ENCODE measurements at regions of chr19 and their contacts with region 1.

Region 1: DNA sequence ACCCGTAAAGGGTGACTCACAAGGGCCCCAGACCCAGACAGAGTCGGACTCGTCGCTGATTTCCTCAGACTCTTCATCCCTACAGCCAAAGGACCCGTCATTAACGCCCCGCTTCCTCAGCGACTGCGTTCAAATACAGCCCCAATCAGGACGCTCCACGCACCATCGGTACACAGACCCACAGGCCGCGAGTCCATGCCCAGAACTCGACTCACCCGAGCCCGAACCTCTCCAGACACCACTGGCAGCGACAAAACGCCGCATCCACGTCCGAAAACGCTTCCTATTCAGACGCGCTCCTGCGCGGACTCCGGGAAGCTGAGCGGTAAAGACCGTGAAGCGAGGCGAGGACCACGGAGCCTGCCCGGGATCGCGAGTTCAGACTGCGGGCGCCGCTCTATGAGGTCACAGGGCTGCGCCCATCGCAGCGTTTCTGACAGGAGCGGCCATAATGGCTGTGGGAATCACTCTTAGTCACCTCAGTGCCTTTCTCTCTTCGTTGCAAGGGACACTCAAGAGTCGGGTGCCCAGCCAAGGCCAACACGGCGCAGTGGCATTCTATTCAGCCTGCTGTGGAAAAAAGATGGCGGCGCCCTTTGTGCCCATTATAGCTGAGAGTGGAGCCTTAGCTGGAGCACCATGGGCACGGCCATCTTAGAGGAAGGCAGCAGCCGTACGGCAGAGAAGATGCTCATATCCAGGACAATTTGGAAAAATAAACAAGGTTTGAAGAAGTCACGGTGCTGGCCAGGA is at the start of gene ZNF614:
- DNase-seq: peak; percentile 83
- H3K4me3 Mint-ChIP-seq: peak within 1 kb of the TSS; percentile 92
- H3K27ac Mint-ChIP-seq: peak within 1 kb of the TSS; percentile 97
- H3K4me1 Mint-ChIP-seq: peaks cover 36% of the 10 kb centered on the region
- H3K27me3 Mint-ChIP-seq: no peaks in the 10 kb centered on the region
- total RNA-seq, gene ZNF614: 11.2 and 11.3 TPM in 2 replicates

Region 2: GRCh38 chr19:51926784-51927742 is 101.1 kb before region 1 on chr19 and contains the start of gene ZNF613:
- intact Hi-C with region 1: loop called (anchors 1 kb)
- DNase-seq: peak; percentile 73
- H3K4me3 Mint-ChIP-seq: peak within 1 kb of the TSS; percentile 99
- H3K27ac Mint-ChIP-seq: peak within 1 kb of the TSS; percentile 94
- H3K4me1 Mint-ChIP-seq: peaks cover 23% of the 10 kb centered on the region
- H3K27me3 Mint-ChIP-seq: no peaks in the 10 kb centered on the region
- total RNA-seq, gene ZNF613: 3.1 and 3.8 TPM in 2 replicates

Region 3: GRCh38 chr19:52007806-52008557 is 20.2 kb before region 1 on chr19 and contains the start of gene ZNF615:
- intact Hi-C with region 1: loop called (anchors 1 kb)
- DNase-seq: peak; percentile 80
- H3K4me3 Mint-ChIP-seq: peak within 1 kb of the TSS; percentile 94
- H3K27ac Mint-ChIP-seq: peak within 1 kb of the TSS; percentile 94
- H3K4me1 Mint-ChIP-seq: peaks cover 20% of the 10 kb centered on the region
- H3K27me3 Mint-ChIP-seq: no peaks in the 10 kb centered on the region
- total RNA-seq, gene ZNF615: 6.4 and 6.9 TPM in 2 replicates

Region 4: GRCh38 chr19:52095172-52096014 is 67.2 kb after region 1 on chr19 and contains the start of gene ZNF841:
- intact Hi-C with region 1: loop called (anchors 1 kb)
- DNase-seq: peak; percentile 81
- H3K4me3 Mint-ChIP-seq: peak within 1 kb of the TSS; percentile 92
- H3K27ac Mint-ChIP-seq: peak within 1 kb of the TSS; percentile 90
- H3K4me1 Mint-ChIP-seq: peaks cover 22% of the 10 kb centered on the region
- H3K27me3 Mint-ChIP-seq: no peaks in the 10 kb centered on the region
- total RNA-seq, gene ZNF841: 13.7 and 16.1 TPM in 2 replicates

Region 5: DNA sequence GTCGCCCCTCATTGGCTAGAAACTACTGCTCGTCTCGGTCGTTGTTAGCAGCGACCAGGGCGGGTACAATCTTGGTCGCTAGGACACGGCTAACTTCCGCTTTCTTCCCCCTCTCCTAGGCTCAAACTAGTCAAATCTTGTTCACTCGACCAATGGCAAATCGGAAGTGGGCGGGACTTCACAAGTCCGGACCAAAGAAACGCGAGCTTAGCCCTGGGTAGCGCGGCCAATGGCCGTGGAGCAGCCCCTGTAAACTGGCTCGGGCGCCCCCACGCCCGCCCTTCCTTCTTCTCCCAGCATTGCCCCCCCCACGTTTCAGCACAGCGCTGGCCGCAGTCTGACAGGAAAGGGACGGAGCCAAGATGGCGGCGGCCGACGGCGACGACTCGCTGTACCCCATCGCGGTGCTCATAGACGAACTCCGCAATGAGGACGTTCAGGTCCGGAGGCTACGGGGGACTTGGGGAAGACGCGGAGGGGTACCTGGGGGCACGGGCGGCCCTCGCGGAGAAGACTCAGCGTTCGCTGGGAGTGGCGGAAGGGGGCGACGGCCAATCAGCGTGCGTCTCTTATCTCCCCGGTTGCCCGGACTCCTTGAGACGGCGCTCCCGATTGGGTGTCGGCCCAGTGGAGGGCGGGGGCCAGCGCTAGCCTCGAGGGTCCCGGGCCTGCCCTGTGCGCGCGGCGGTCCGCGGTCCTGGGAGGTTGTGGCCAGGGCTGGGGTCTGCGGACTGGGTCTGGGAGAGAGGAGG is 161.7 kb after region 1 on chr19 and contains the start of gene PPP2R1A:
- intact Hi-C with region 1: loop called (anchors 5 kb)
- DNase-seq: peak; percentile 97
- H3K4me3 Mint-ChIP-seq: peak within 1 kb of the TSS; percentile 98
- H3K27ac Mint-ChIP-seq: peak within 1 kb of the TSS; percentile 99
- H3K4me1 Mint-ChIP-seq: peaks cover 45% of the 10 kb centered on the region
- H3K27me3 Mint-ChIP-seq: no peaks in the 10 kb centered on the region
- total RNA-seq, gene PPP2R1A: 214 and 215 TPM in 2 replicates

Region 6: DNA sequence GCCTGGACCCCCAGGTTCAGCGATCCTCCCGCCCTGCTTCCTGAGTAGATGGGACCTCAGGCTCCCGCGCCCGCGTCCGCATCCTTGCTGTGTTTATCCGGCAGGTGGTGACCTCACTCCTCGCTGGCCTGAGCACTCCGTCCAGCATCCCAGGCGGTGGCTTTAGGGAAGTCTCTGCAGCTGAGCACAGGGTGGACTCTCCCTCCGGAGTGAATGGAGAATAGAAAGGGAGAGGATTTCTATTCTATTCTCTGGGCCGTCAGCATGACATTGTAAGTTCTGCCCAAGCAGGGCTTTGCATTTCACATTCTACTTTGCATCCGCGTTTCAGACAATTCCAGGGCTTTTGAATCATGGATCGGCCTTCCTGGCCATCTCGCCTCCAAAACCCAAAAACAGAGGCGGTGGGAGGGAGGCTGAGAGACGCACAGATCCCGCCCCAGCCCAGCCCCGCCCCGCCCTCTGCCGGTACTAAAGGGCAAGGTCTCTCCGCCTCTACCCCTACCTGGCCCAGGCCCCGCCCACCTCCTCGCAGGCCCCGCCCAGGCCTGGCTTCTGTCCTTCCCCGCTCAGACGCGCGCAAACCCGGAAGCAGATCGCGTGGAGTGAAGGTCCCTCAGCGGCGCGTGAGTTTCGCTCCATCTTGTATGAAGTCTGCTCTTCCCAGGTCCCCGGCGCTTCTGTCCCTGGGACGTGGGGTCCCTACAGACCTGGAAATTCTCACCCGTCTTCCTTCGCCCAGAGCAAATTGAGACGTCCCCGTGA is 1337.1 kb after region 1 on chr19 and contains the start of gene ZNF525:
- intact Hi-C with region 1: loop called (anchors 1 kb)
- DNase-seq: peak; percentile 93
- H3K4me3 Mint-ChIP-seq: peak within 1 kb of the TSS; percentile 93
- H3K27ac Mint-ChIP-seq: peak within 1 kb of the TSS; percentile 91
- H3K4me1 Mint-ChIP-seq: peaks cover 17% of the 10 kb centered on the region
- H3K27me3 Mint-ChIP-seq: no peaks in the 10 kb centered on the region
- total RNA-seq, gene ZNF525: 16.5 and 19.0 TPM in 2 replicates

Measured in activated T-helper 1 cell treated with anti-CD3 and anti-CD28 coated beads, Interleukin-12 subunit alpha, Interleukin-12 subunit beta, Interleukin-2, Interleukin-4 antibody, amounts not matched to agents 30 ng/mL and 10 ng/mL and 1 ng/mL, durations not matched to agents 14 hours and 24 hours and 36 hours (primary cell).